Astrocyte of the cerebellum (primary cell): ENCODE measurements at regions of chr9 and their contacts with region 1.

Region 1: DNA sequence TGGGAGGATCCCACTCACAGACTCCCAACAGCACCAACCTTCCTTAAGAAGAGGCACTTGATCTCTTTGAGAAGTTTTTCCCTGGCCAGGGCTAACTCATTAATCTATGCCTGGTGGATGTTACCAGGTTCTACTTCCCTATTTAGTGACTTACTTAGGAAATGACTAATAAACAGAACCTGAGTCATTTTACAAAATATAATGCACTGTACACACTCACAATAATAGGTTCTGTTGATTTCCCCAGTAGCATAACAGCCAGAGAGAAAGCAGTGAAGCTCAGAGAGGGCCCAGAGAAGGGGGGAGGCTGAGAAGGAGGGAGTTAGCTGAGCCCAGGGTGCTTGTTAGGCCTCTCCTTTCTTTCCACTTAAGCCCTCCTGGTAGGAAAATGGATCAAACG is 27.1 kb downstream of the FRMD3 start:
- DNase-seq: no peak
- H3K4me3 ChIP-seq: no peak overlapping the region
- CTCF ChIP-seq: no peak

Region 2: DNA sequence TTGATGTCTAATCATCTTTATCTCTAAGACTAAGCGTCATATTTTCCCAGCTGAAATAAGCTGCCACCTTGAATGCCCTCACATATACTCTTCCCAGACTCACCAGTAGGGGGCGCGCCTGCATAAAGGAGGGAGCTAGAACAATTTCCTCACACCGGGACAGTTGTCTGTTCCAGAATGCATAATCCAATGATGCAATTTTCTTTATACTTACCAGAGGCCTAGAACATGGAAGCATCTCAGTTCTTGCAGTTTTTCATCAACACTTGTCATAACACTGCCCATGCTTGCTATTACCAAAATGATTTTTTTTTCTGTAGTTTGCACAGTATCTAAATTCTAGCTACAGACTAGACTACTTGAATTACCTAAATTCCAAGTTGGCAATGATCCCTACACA is 176.7 kb before region 1 on chr9:
- in situ Hi-C with region 1: loop called (anchors 25 kb)
- DNase-seq: peak; percentile 80
- H3K4me3 ChIP-seq: no peak overlapping the region
- CTCF ChIP-seq: peak; percentile 88